ENCODE measurements at regions of chr17 and their contacts with region 1.

Region 1: DNA sequence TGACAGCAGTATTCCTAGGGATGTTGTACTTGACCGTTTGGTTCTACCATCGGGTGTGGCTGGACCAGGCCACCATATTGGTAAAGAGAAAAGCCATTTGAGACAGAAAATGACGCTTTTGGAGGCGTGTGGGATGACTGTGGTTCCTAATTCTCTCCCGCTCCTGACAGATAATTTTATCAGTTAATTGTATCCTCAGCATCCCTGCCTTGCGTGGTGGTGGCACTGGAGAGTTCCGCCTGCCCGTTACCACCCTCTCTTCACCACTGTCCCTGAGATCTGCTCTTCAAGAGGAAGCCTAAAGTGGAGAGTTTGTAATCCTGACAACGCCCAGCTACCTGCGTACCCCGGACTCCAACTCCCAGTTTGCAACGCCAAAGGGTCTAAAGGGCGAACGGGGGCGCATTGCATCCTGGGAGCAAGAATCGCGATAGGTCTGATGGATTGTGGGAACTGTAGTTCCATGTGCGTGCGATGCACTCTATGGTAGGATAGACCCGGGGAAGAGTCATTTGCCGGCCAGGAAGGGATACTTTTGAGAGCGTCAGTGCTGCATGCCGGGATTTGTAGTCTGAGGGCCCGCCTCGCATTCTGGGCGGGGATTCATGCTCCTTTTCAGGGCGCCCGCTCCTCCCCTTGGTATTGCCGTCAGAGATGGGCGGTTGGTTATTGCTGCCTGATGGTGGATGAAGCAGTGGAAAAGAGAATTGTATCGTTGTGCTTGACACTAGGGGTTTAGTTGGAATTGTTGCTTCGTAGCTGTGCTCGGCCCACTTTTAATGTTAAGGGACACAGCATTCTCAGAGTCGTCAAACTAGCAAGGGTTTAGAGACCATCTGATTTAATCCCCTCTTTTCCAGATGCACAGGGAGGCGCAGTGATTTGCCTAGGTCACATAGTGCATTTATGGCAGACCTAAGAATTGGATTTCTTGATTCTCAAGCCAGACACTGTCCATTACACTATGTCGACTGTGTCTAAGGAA is 965 bp upstream of the PHF12 start:
- DNase-seq: peak; percentile 87 to 100 (median 94)
- ATAC-seq: peak; percentile 68
- H3K4me3 ChIP-seq: peak overlapping the region; percentile 69 to 77
- H3K4me3 Mint-ChIP-seq: no peak overlapping the region
- H3K27ac ChIP-seq: peak overlapping the region; percentile 85 to 97
- H3K27ac Mint-ChIP-seq: no peak overlapping the region
- H3K4me1 ChIP-seq: peaks cover 28% of the 10 kb centered on the region
- H3K4me1 Mint-ChIP-seq: peaks cover 14% of the 10 kb centered on the region
- H3K27me3 ChIP-seq: no peaks in the 10 kb centered on the region
- H3K27me3 Mint-ChIP-seq: no peaks in the 10 kb centered on the region
- CTCF ChIP-seq: no peak

Region 2: DNA sequence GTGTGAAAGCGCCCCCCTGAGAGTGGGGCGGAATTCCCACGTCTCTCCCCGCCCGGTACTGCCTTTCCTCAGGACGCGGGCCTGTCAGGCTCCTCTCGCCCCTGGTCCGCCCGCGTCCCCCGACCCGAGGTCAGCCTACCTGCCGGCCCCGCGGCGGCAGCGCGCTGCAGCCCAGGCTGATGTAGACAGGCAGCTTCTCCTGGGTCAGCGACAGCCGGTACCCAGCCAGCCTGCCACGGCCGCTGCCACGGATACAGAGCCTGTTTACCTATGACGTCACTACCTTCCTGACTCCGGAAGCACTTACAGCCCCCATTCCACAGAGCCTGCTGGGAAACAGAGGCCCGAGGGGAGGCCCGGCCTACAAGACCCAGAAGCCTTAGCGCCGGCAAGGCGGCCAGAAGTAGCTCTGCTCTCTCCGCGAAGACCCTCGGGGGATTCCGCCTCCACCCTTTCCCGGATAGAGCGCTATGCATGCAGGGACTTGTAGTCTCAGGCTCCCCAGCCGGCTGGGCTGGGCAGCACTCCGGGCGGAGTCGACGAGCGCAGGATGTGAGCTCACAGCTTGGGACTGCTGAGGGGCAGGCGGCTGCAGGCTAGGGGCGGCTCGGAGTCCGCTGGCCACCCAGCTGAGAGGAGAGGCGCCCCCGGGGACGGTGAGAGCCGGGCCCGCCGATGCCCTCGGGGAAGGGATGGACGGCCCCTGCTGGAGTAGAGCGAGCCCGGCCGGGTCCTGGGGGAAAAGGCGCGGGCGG is 616.9 kb before region 1 on chr17 and contains the starts of genes IFT20 and TNFAIP1:
- CTCF ChIA-PET with region 1: no interaction called
- POLR2A ChIA-PET with region 1: interaction called, 4 read pairs
- intact Hi-C with region 1: loop called in 1 of 2 experiments (anchors 5 kb)
- DNase-seq: peak; percentile 94 to 100 (median 97)
- ATAC-seq: peak; percentile 96
- H3K4me3 ChIP-seq: peak within 1 kb of the TSS; percentile 80 to 95
- H3K4me3 Mint-ChIP-seq: peak within 1 kb of the TSS; percentile 99
- H3K27ac ChIP-seq: peak within 1 kb of the TSS; percentile 92 to 97
- H3K27ac Mint-ChIP-seq: peak within 1 kb of the TSS; percentile 97
- H3K4me1 ChIP-seq: peaks cover 22% of the 10 kb centered on the region
- H3K4me1 Mint-ChIP-seq: peaks cover 41% of the 10 kb centered on the region
- H3K27me3 ChIP-seq: no peaks in the 10 kb centered on the region
- H3K27me3 Mint-ChIP-seq: no peaks in the 10 kb centered on the region
- CTCF ChIP-seq: no peak
- total RNA-seq, gene IFT20: 32.5 to 34.6 TPM
- total RNA-seq, gene TNFAIP1: 15.3 to 15.5 TPM

Region 3: DNA sequence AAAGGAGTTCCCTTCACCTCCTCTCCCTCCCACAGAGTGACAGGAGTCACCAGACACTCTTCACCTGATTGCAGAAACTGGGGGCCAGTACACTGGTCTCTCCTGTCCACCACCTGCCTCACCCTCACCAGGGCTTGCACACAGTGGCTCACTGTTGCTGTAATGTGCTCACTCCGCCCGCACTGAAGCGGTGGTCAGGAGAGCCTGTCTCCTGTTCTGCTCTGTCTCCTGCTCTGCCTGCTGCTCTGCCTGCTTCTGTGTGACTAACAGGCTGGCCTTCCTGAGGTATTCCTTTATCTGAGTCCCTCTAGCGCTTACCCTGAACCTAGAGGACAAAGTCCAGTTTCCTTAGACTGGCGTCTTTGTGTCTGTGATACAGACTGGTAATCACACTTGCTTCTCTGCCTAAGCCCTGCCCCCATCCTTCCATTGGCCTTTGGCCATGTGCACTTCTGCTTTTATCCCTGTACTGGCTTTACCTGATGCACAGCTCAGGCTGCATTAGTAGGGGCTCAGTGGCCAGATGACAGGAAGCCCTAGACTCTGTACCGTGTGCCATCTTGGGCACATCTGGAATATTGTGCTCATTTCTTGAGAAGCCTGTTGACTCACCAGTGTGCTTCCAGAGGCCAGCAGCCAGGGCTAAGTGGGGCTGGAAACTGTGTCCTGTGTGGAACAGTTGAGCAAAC is 253.9 kb before region 1 on chr17:
- CTCF ChIA-PET with region 1: no interaction called
- POLR2A ChIA-PET with region 1: no interaction called
- intact Hi-C with region 1: no loop called
- DNase-seq: no peak
- ATAC-seq: no peak
- H3K4me3 ChIP-seq: no peak overlapping the region
- H3K4me3 Mint-ChIP-seq: no peak overlapping the region
- H3K27ac ChIP-seq: no peak overlapping the region
- H3K27ac Mint-ChIP-seq: no peak overlapping the region
- H3K4me1 ChIP-seq: no peaks in the 10 kb centered on the region
- H3K4me1 Mint-ChIP-seq: no peaks in the 10 kb centered on the region
- H3K27me3 ChIP-seq: no peaks in the 10 kb centered on the region
- H3K27me3 Mint-ChIP-seq: no peaks in the 10 kb centered on the region
- CTCF ChIP-seq: no peak

Region 4: GRCh38 chr17:28717578-28718333 is 234.5 kb before region 1 on chr17 and contains the start of gene RAB34:
- CTCF ChIA-PET with region 1: interaction called, 5 read pairs
- POLR2A ChIA-PET with region 1: interaction called, 55 read pairs
- intact Hi-C with region 1: loop called (anchors 1 kb)
- DNase-seq: peak in 4 of 9 experiments; percentile 22 to 53 (median 33)
- ATAC-seq: no peak
- H3K4me3 ChIP-seq: no peak within 1 kb of the TSS
- H3K4me3 Mint-ChIP-seq: peak within 1 kb of the TSS; percentile 59
- H3K27ac ChIP-seq: no peak within 1 kb of the TSS
- H3K27ac Mint-ChIP-seq: peak within 1 kb of the TSS; percentile 55
- H3K4me1 ChIP-seq: peaks cover 28% of the 10 kb centered on the region
- H3K4me1 Mint-ChIP-seq: peaks cover 39% of the 10 kb centered on the region
- H3K27me3 ChIP-seq: peaks cover 0 to 12% of the 10 kb centered on the region in 2 experiments
- H3K27me3 Mint-ChIP-seq: peaks cover 16% of the 10 kb centered on the region
- CTCF ChIP-seq: no peak
- total RNA-seq, gene RAB34: 13.9 to 14.1 TPM

Region 5: GRCh38 chr17:28842282-28843012 is 109.8 kb before region 1 on chr17 and contains the start of gene FAM222B:
- CTCF ChIA-PET with region 1: interaction called, 5 read pairs
- POLR2A ChIA-PET with region 1: interaction called, 7 read pairs
- intact Hi-C with region 1: loop called (anchors 1 to 2 kb)
- DNase-seq: peak; percentile 68 to 94 (median 83)
- ATAC-seq: peak; percentile 98
- H3K4me3 ChIP-seq: peak within 1 kb of the TSS; percentile 62 to 91
- H3K4me3 Mint-ChIP-seq: peak within 1 kb of the TSS; percentile 97
- H3K27ac ChIP-seq: peak within 1 kb of the TSS; percentile 65 to 79
- H3K27ac Mint-ChIP-seq: peak within 1 kb of the TSS; percentile 94
- H3K4me1 ChIP-seq: peaks cover 16% of the 10 kb centered on the region
- H3K4me1 Mint-ChIP-seq: peaks cover 25% of the 10 kb centered on the region
- H3K27me3 ChIP-seq: no peaks in the 10 kb centered on the region
- H3K27me3 Mint-ChIP-seq: no peaks in the 10 kb centered on the region
- CTCF ChIP-seq: no peak
- total RNA-seq, gene FAM222B: 20.2 to 20.6 TPM

Region 6: GRCh38 chr17:28902819-28903545 is 49.3 kb before region 1 on chr17 and contains the start of gene DHRS13:
- CTCF ChIA-PET with region 1: interaction called, 20 read pairs
- POLR2A ChIA-PET with region 1: interaction called, 12 read pairs
- intact Hi-C with region 1: loop called (anchors 1 kb)
- DNase-seq: peak; percentile 87 to 98 (median 95)
- ATAC-seq: peak; percentile 93
- H3K4me3 ChIP-seq: peak within 1 kb of the TSS; percentile 71 to 72
- H3K4me3 Mint-ChIP-seq: peak within 1 kb of the TSS; percentile 93
- H3K27ac ChIP-seq: peak within 1 kb of the TSS; percentile 61 to 62
- H3K27ac Mint-ChIP-seq: peak within 1 kb of the TSS; percentile 90
- H3K4me1 ChIP-seq: peaks cover 31% of the 10 kb centered on the region
- H3K4me1 Mint-ChIP-seq: peaks cover 33% of the 10 kb centered on the region
- H3K27me3 ChIP-seq: no peaks in the 10 kb centered on the region
- H3K27me3 Mint-ChIP-seq: no peaks in the 10 kb centered on the region
- CTCF ChIP-seq: peak; percentile 100
- total RNA-seq, gene DHRS13: 27.3 to 30.9 TPM

Region 7: DNA sequence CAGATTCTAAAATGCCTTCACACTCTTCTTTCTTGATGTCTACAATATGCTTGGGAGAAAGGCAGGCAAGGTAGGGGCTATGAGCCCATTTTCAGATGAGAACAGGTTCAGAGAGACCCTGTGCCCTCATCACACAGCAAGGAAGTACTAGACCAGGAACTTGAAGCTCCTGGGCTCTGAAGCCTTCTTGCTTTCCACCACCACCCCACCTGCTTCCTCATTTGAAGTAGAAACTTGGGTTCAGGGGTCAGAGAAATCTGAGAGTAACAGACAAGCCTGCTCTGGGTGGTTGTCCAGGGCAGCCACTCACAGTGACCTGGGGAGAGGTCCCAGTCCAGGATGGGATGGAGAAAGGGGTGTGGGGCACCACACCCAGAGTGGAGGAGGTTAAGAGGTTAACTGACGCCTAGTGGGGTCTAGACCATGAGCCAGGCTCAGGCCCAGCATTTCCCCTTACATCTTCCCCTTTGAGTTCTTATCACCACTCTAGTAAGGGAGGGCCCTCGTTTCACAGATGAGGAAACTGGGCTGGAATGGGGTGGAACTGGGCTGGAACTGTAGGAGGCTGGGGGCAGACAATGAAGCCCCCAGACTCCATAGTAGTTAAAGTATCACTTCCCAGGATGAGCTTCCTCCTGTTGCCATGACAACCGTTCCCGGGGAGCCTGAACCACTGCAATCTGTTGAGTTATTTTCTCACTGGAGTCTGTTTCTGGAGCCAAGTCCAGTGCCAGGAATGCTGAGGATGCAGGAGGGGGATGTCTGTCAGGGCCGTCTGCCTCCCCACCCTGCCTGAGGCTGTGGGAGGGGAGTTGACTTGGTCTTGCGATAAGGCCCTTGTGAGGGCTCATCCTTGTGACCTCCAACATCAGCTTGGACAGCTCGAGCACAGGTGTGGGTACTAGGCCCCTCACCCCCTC is 15.2 kb after region 1 on chr17:
- CTCF ChIA-PET with region 1: interaction called, 26 read pairs
- POLR2A ChIA-PET with region 1: interaction called, 4 read pairs
- intact Hi-C with region 1: no loop called
- DNase-seq: no peak
- ATAC-seq: no peak
- H3K4me3 ChIP-seq: no peak overlapping the region
- H3K4me3 Mint-ChIP-seq: no peak overlapping the region
- H3K27ac ChIP-seq: no peak overlapping the region
- H3K27ac Mint-ChIP-seq: no peak overlapping the region
- H3K4me1 ChIP-seq: no peaks in the 10 kb centered on the region
- H3K4me1 Mint-ChIP-seq: peaks cover 4% of the 10 kb centered on the region
- H3K27me3 ChIP-seq: peaks cover 0 to 5% of the 10 kb centered on the region in 2 experiments
- H3K27me3 Mint-ChIP-seq: peaks cover 9% of the 10 kb centered on the region
- CTCF ChIP-seq: no peak

Region 8: GRCh38 chr17:28992625-28993600 is 40.6 kb after region 1 on chr17:
- CTCF ChIA-PET with region 1: no interaction called
- POLR2A ChIA-PET with region 1: no interaction called
- intact Hi-C with region 1: no loop called
- DNase-seq: no peak
- ATAC-seq: no peak
- H3K4me3 ChIP-seq: no peak overlapping the region
- H3K4me3 Mint-ChIP-seq: no peak overlapping the region
- H3K27ac ChIP-seq: no peak overlapping the region
- H3K27ac Mint-ChIP-seq: no peak overlapping the region
- H3K4me1 ChIP-seq: no peaks in the 10 kb centered on the region
- H3K4me1 Mint-ChIP-seq: no peaks in the 10 kb centered on the region
- H3K27me3 ChIP-seq: peaks cover 0 to 5% of the 10 kb centered on the region in 2 experiments
- H3K27me3 Mint-ChIP-seq: peaks cover 19% of the 10 kb centered on the region
- CTCF ChIP-seq: no peak

Region 9: GRCh38 chr17:29293890-29294579 is 341.8 kb after region 1 on chr17 and contains the start of gene NUFIP2:
- CTCF ChIA-PET with region 1: no interaction called
- POLR2A ChIA-PET with region 1: interaction called, 3 read pairs
- intact Hi-C with region 1: loop called (anchors 1 kb)
- DNase-seq: peak; percentile 94 to 100 (median 99)
- ATAC-seq: peak; percentile 86
- H3K4me3 ChIP-seq: peak within 1 kb of the TSS; percentile 93 to 94
- H3K4me3 Mint-ChIP-seq: peak within 1 kb of the TSS; percentile 99
- H3K27ac ChIP-seq: peak within 1 kb of the TSS; percentile 70 to 89
- H3K27ac Mint-ChIP-seq: peak within 1 kb of the TSS; percentile 98
- H3K4me1 ChIP-seq: peaks cover 40% of the 10 kb centered on the region
- H3K4me1 Mint-ChIP-seq: peaks cover 42% of the 10 kb centered on the region
- H3K27me3 ChIP-seq: no peaks in the 10 kb centered on the region
- H3K27me3 Mint-ChIP-seq: no peaks in the 10 kb centered on the region
- CTCF ChIP-seq: no peak
- total RNA-seq, gene NUFIP2: 67.9 to 71.8 TPM